ENCODE measurements at regions of chr14 and their contacts with region 1.

Region 1: DNA sequence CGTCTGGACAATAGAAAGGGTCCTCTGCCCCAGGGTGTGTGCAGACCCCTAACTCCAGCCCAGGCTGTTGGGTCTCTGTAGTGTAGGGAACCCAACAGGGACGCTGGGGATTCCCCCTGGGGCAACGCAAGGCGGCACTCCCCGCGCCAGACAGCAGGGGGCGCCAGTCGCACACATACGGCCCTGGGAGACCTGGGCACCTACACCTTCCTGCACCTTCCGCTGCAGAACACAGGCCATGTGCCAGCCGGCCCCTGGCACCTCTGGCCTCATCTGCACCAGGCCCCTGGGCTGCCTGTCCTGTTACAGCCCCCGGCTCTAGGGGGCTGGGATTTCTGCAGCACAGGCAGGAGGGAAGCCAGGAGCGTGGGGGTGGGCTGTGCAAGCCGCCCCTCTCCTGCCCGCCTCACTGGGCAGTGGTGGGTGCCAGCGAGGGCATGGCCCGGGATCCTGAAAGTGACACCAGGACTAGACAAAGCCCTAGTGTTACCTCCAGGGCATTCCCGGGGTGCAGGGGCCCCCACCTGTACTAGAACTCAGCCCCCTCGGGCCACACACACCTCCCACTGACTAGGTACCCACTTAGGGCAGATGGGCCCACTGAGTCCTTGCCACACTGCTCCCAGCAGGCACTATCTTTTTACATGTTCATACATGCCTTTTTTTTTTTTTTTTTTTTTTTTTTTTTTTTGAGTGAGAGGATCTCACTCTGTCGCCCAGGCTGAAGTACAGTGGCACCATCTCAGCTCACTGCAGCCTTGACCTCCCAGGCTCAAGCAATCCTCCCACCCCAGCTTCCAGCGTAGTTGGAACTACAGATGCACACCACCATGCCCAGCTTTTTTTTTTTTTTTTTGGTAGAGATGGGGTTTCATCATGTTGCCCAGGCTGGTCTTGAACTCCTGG is 37.5 kb downstream of the CCNK start:
- DNase-seq: peak; percentile 64 to 84
- ATAC-seq: peak; percentile 70 to 85 (median 74)
- H3K4me3 ChIP-seq: no peak overlapping the region
- H3K27ac ChIP-seq: no peak overlapping the region
- H3K4me1 ChIP-seq: no peaks in the 10 kb centered on the region
- H3K27me3 ChIP-seq: no peaks in the 10 kb centered on the region
- CTCF ChIP-seq: peak; percentile 99

Region 2: GRCh38 chr14:99314470-99315022 is 204.1 kb before region 1 on chr14:
- intact Hi-C with region 1: no loop called
- DNase-seq: no peak
- ATAC-seq: no peak
- H3K4me3 ChIP-seq: no peak overlapping the region
- H3K27ac ChIP-seq: no peak overlapping the region
- H3K4me1 ChIP-seq: no peaks in the 10 kb centered on the region
- H3K27me3 ChIP-seq: peaks cover 0 to 4% (median 3%) of the 10 kb centered on the region in 3 donors
- CTCF ChIP-seq: no peak

Region 3: GRCh38 chr14:99484106-99484505 is 34.6 kb before region 1 on chr14:
- intact Hi-C with region 1: loop called in 1 of 2 experiments (anchors 1 kb)
- DNase-seq: no peak
- ATAC-seq: no peak
- H3K4me3 ChIP-seq: no peak overlapping the region
- H3K27ac ChIP-seq: no peak overlapping the region
- H3K4me1 ChIP-seq: peaks cover 68% of the 10 kb centered on the region
- H3K27me3 ChIP-seq: no peaks in the 10 kb centered on the region
- CTCF ChIP-seq: no peak

Region 4: GRCh38 chr14:99568567-99569560 is 50.2 kb after region 1 on chr14:
- intact Hi-C with region 1: loop called in 1 of 2 experiments (anchors 5 kb)
- DNase-seq: no peak
- ATAC-seq: no peak
- H3K4me3 ChIP-seq: no peak overlapping the region
- H3K27ac ChIP-seq: no peak overlapping the region
- H3K4me1 ChIP-seq: peaks cover 41% of the 10 kb centered on the region
- H3K27me3 ChIP-seq: no peaks in the 10 kb centered on the region
- CTCF ChIP-seq: no peak

Region 5: GRCh38 chr14:99628832-99629618 is 110.3 kb after region 1 on chr14:
- intact Hi-C with region 1: loop called (anchors 1 to 2 kb)
- DNase-seq: peak; percentile 74 to 87
- ATAC-seq: peak; percentile 93 to 98 (median 96)
- H3K4me3 ChIP-seq: no peak overlapping the region
- H3K27ac ChIP-seq: no peak overlapping the region
- H3K4me1 ChIP-seq: no peaks in the 10 kb centered on the region
- H3K27me3 ChIP-seq: peaks cover 0 to 3% (median 3%) of the 10 kb centered on the region in 3 donors
- CTCF ChIP-seq: peak; percentile 98

Region 6: DNA sequence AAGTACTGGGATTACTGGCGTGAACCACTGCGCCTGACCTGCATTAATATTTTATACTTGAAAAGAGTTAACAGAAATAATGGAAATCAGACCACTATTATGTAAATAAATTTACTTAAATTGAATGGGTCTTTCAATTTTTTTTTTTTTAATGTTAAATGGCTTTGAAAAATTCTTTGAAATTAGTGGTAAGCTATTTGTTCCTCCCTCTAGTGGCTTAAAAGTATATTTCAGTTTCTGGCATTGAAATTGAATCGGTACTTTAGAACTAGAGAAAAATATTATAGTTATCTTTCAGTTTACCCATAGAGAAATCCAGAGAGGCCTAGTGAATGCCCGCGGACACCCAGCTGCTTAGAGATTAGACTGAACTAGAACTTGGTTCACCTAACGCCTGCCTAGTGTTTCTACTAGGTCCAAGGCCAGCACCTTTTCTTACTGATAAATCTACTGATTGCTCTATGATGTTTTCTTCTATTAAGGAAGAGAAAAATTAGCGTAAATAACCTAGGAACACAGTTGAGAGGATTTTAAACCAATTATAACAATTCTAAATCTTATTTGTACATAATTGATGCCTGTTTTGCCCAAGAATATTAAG is 381.0 kb after region 1 on chr14:
- intact Hi-C with region 1: loop called in 1 of 2 experiments (anchors 10 kb)
- DNase-seq: no peak
- ATAC-seq: no peak
- H3K4me3 ChIP-seq: no peak overlapping the region
- H3K27ac ChIP-seq: no peak overlapping the region
- H3K4me1 ChIP-seq: no peaks in the 10 kb centered on the region
- H3K27me3 ChIP-seq: no peaks in the 10 kb centered on the region
- CTCF ChIP-seq: peak; percentile 47

Region 7: DNA sequence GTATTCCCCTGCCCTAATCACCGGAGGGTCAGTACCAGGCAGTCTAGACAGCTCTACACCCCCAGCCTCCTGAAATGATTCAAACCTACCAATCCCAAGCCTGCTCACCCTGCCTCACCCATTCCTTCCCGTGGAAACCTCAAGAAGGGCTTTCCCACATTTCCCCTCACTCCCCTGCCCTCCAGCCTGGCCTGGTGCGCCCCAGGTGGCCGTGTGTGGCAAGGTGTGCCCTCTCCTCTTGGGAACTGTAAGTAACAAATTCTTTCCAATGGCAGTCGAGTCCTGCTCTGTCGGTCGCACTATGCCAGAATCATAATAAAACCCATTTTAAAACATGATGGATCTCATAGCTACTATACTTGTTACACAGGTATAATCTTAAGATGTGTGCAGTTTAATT is 654.7 kb after region 1 on chr14:
- intact Hi-C with region 1: no loop called
- DNase-seq: no peak
- ATAC-seq: no peak
- H3K4me3 ChIP-seq: no peak overlapping the region
- H3K27ac ChIP-seq: no peak overlapping the region
- H3K4me1 ChIP-seq: no peaks in the 10 kb centered on the region
- H3K27me3 ChIP-seq: peaks cover 0 to 33% (median 2%) of the 10 kb centered on the region in 3 donors
- CTCF ChIP-seq: no peak